ENCODE measurements at regions of chr10 and their contacts with region 1.

Region 1: DNA sequence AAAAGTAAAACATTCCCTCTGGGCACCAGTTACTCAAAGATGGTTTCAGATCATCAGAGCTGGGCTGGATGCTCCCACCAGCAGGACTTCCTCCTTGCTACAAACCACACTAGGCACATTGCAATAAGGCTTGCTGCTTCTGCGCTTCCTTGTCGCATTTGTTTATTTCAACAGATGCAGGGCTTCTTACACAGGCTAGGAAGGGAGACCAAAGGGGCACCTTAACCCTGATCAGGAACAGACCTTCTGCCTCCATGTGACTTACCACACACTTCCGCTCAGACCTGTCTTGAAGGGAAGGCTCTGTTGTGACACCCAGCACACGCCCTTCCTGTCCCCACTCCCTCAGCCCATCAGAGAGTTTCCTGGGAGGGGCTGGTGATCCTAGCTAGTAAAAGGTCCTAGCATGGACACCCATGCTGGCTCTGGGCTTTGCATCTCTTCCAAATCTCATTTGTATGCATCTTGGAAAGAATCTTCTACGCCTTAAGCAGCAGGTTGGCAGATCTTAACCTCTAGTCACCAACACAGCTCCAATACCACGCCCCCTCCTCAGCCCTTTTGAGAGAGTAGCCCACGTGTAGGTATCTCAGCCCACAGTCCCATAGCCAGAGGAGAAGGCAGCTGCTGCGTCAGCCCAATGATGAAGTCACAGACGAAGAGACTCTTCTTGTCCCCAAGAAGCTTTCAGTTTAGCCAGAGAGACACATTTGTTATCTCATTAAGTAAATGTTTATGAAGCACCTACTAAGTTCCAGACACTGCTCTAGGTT is 47.1 kb upstream of the SVIL start:
- DNase-seq: peak; percentile 81 to 88 (median 86)
- H3K4me3 ChIP-seq: peak overlapping the region in 1 of 2 donors; percentile 46
- H3K4me3 Mint-ChIP-seq: peak overlapping the region; percentile 49 to 85 (median 78)
- H3K27ac ChIP-seq: peak overlapping the region; percentile 54
- H3K27ac Mint-ChIP-seq: peak overlapping the region; percentile 90 to 99 (median 98)
- H3K4me1 ChIP-seq: peaks cover 66% of the 10 kb centered on the region
- H3K4me1 Mint-ChIP-seq: peaks cover 60 to 99% (median 79%) of the 10 kb centered on the region in 4 donors
- H3K27me3 ChIP-seq: no peaks in the 10 kb centered on the region
- H3K27me3 Mint-ChIP-seq: no peaks in the 10 kb centered on the region

Region 2: DNA sequence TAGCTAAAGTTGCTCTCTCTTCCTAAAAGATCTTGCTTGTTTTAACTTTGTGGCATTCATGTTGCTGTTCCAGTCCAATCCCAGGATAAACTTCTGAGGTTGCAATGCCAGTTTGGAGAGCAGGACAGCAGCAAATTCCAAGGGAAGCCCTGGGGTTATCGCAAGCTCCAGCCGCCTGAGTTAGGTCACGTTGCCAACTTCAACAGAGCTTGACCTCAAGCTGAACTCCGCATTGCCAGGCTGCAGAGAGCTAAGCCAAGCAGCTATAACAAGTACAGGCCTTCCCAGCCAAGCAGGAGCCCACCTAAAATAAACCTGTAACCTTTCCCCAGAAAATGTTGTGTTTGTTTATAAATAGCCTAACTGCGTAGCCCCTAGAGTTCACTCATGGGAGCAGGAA is 531.9 kb before region 1 on chr10:
- CTCF ChIA-PET with region 1: no interaction called
- POLR2A ChIA-PET with region 1: no interaction called
- intact Hi-C with region 1: no loop called
- DNase-seq: no peak
- H3K4me3 ChIP-seq: no peak overlapping the region
- H3K4me3 Mint-ChIP-seq: no peak overlapping the region
- H3K27ac ChIP-seq: no peak overlapping the region
- H3K27ac Mint-ChIP-seq: no peak overlapping the region
- H3K4me1 ChIP-seq: no peaks in the 10 kb centered on the region
- H3K4me1 Mint-ChIP-seq: no peaks in the 10 kb centered on the region
- H3K27me3 ChIP-seq: no peaks in the 10 kb centered on the region
- H3K27me3 Mint-ChIP-seq: peaks cover 3 to 8% of the 10 kb centered on the region in 2 donors

Region 3: DNA sequence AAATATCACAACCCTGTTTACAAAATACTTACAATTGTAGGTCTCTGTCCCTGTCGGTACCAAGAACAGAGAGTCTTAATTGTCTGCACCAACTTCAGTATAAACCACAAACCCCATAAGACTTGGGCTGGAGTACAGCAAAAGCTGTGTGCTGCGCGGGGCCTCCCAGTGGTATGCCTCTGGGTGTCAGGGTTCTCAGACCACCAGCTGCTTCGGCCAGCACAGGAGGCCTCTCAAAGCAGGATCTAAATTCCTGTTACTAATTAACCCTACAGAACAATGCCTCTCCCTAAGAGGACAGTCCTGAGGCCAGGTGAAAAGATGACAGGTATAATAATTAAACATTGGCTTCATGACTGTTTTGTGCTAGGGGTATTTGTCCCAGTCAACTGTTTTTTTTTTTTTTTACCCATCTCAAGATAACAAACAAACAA is 46.1 kb before region 1 on chr10:
- CTCF ChIA-PET with region 1: interaction called, 3 read pairs
- POLR2A ChIA-PET with region 1: interaction called, 11 read pairs
- intact Hi-C with region 1: loop called (anchors 2 kb)
- DNase-seq: peak; percentile 43 to 60 (median 55)
- H3K4me3 ChIP-seq: peak overlapping the region in 1 of 2 donors; percentile 11
- H3K4me3 Mint-ChIP-seq: peak overlapping the region; percentile 68 to 83 (median 74)
- H3K27ac ChIP-seq: peak overlapping the region; percentile 67
- H3K27ac Mint-ChIP-seq: peak overlapping the region; percentile 82 to 97 (median 96)
- H3K4me1 ChIP-seq: peaks cover 46% of the 10 kb centered on the region
- H3K4me1 Mint-ChIP-seq: peaks cover 33 to 66% (median 54%) of the 10 kb centered on the region in 4 donors
- H3K27me3 ChIP-seq: no peaks in the 10 kb centered on the region
- H3K27me3 Mint-ChIP-seq: no peaks in the 10 kb centered on the region

Region 4: GRCh38 chr10:29646238-29646902 is 35.5 kb before region 1 on chr10:
- CTCF ChIA-PET with region 1: no interaction called
- POLR2A ChIA-PET with region 1: interaction called, 10 read pairs
- intact Hi-C with region 1: no loop called
- DNase-seq: peak in 1 of 5 donors; percentile 22
- H3K4me3 ChIP-seq: no peak overlapping the region
- H3K4me3 Mint-ChIP-seq: peak overlapping the region in 7 of 8 donors; percentile 37 to 84 (median 67)
- H3K27ac ChIP-seq: peak overlapping the region; percentile 22
- H3K27ac Mint-ChIP-seq: peak overlapping the region in 6 of 7 donors; percentile 76 to 96 (median 92)
- H3K4me1 ChIP-seq: peaks cover 36% of the 10 kb centered on the region
- H3K4me1 Mint-ChIP-seq: peaks cover 30 to 74% (median 51%) of the 10 kb centered on the region in 4 donors
- H3K27me3 ChIP-seq: no peaks in the 10 kb centered on the region
- H3K27me3 Mint-ChIP-seq: no peaks in the 10 kb centered on the region

Region 5: DNA sequence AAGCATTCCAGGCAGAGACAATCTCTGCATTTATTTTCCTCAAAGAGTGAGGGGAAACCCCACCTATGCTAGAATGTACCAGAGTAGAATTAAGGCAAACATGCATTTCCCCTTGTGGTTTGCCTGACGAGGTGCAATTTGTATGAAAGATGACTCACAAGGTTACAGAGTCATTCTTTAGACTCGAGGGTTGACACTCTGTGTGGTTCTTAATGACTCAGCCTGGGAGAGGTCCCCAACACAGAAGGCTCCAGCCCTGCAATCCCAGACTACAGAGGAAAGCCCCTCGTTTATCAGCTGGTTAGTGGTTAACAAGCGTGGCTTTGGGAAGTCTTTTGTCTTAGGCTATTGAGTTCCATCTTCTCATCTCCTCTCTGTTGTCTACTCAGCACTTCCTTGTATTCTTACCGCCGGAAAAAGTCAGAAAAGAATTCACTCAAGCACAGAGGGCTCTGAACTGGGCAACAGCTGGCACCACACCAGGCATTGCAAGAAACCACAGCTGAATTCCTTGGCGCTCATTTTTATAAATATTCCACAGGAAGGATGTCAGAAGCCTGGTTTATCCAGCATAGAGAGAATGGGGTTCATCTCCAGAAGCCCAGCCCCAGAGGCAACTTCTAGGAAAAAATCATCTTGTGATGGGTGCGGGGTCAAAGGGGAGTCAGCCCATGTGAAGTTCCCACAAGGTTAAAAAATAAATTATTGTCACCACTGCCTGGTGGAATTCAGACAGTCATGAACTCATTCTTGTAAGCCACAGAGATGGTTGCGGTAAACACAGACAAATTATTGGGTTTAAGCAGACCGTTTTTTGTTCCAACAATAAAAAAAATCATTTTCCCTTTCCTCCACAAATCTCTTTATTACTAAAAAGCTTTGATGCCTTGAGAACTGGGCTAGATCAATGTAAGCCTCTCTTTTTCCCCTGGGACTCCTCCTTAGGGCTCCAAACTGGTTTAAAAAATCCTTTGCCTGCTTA is 22.6 kb before region 1 on chr10:
- CTCF ChIA-PET with region 1: interaction called, 4 read pairs
- POLR2A ChIA-PET with region 1: interaction called, 28 read pairs
- intact Hi-C with region 1: loop called (anchors 1 kb)
- DNase-seq: peak; percentile 76 to 95 (median 78)
- H3K4me3 ChIP-seq: peak overlapping the region in 1 of 2 donors; percentile 5
- H3K4me3 Mint-ChIP-seq: peak overlapping the region; percentile 60 to 80 (median 69)
- H3K27ac ChIP-seq: peak overlapping the region; percentile 66
- H3K27ac Mint-ChIP-seq: peak overlapping the region; percentile 88 to 96 (median 94)
- H3K4me1 ChIP-seq: peaks cover 33% of the 10 kb centered on the region
- H3K4me1 Mint-ChIP-seq: peaks cover 28 to 53% (median 34%) of the 10 kb centered on the region in 4 donors
- H3K27me3 ChIP-seq: no peaks in the 10 kb centered on the region
- H3K27me3 Mint-ChIP-seq: no peaks in the 10 kb centered on the region

Region 6: GRCh38 chr10:29702273-29703164 is 20.7 kb after region 1 on chr10:
- CTCF ChIA-PET with region 1: no interaction called
- POLR2A ChIA-PET with region 1: interaction called, 15 read pairs
- intact Hi-C with region 1: no loop called
- DNase-seq: peak in 3 of 5 donors; percentile 6 to 17 (median 14)
- H3K4me3 ChIP-seq: no peak overlapping the region
- H3K4me3 Mint-ChIP-seq: peak overlapping the region; percentile 32 to 88 (median 68)
- H3K27ac ChIP-seq: peak overlapping the region; percentile 43
- H3K27ac Mint-ChIP-seq: peak overlapping the region; percentile 58 to 94 (median 81)
- H3K4me1 ChIP-seq: peaks cover 17% of the 10 kb centered on the region
- H3K4me1 Mint-ChIP-seq: peaks cover 36 to 68% (median 46%) of the 10 kb centered on the region in 4 donors
- H3K27me3 ChIP-seq: no peaks in the 10 kb centered on the region
- H3K27me3 Mint-ChIP-seq: no peaks in the 10 kb centered on the region

Measured in CD4-positive, alpha-beta memory T cell (primary cell).